OCI-LY7 (cell line): ENCODE measurements at regions of chr11 and their contacts with region 1.

Region 1: GRCh38 chr11:67401495-67402191 is at the start of gene PPP1CA:
- DNase-seq: peak; percentile 92
- H3K4me3 ChIP-seq: peak within 1 kb of the TSS; percentile 97
- H3K27ac ChIP-seq: peak within 1 kb of the TSS; percentile 97
- H3K4me1 ChIP-seq: peaks cover 59% of the 10 kb centered on the region
- CTCF ChIP-seq: no peak; the same call in none of the 2 replicates
- total RNA-seq, gene PPP1CA: 248 and 311 TPM in 2 replicates

Region 2: DNA sequence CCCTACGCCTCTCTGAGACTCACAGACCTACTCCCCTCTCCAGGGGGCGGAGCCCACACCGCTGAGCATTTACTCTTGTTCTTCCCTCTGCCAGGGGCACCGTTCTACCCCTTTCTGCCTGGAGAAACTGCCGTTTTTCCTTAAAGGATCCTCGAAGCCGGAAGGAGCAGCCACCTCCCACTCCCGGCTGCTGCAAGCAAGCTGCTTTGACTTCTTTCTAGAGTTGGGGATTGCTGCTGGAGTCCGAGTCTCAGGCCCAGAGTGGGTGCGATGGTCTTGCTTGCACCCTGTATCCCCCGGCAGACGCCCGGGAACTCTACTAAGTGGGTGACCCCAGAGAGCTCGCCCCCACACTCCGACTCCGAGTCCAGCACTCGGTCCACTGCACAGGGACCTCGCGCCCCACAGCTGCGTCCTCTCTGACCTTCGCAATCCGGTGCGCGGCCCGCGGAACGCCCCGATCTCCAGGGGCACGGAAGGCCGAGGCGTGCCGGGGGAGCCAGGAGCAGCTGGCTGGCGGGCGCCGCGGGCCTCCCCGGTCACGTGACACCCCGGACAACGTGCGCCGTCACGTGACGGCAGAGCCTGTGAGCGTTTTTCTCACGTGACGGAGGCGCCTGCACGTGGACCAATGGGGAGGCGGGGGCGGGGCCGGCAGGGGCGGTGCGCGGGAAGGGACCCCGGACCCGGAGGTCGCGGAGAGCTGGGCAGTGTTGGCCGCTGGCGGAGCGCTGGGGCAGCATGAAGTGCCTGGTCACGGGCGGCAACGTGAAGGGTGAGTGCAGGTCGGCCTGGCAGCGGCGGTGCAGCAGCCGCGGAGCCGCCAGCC is 10.1 kb before region 1 on chr11 and contains the start of gene RAD9A:
- CTCF ChIA-PET with region 1: interaction called, 6 read pairs
- POLR2A ChIA-PET with region 1: interaction called, 16 read pairs
- intact Hi-C with region 1: no loop called
- DNase-seq: peak; percentile 98
- H3K4me3 ChIP-seq: peak within 1 kb of the TSS; percentile 78
- H3K27ac ChIP-seq: peak within 1 kb of the TSS; percentile 54
- H3K4me1 ChIP-seq: peaks cover 36% of the 10 kb centered on the region
- CTCF ChIP-seq: no peak
- total RNA-seq, gene RAD9A: 30.1 and 51.0 TPM in 2 replicates

Region 3: GRCh38 chr11:67420646-67421420 is 19.2 kb after region 1 on chr11:
- CTCF ChIA-PET with region 1: interaction called, 3 read pairs
- POLR2A ChIA-PET with region 1: interaction called, 15 read pairs
- intact Hi-C with region 1: loop called (anchors 1 kb)
- DNase-seq: peak; percentile 95
- H3K4me3 ChIP-seq: peak overlapping the region; percentile 68
- H3K27ac ChIP-seq: peak overlapping the region; percentile 19
- H3K4me1 ChIP-seq: peaks cover 50% of the 10 kb centered on the region
- CTCF ChIP-seq: no peak

Region 4: GRCh38 chr11:67439321-67439883 is 37.8 kb after region 1 on chr11:
- CTCF ChIA-PET with region 1: interaction called, 7 read pairs
- POLR2A ChIA-PET with region 1: interaction called, 38 read pairs
- intact Hi-C with region 1: no loop called
- DNase-seq: no peak
- H3K4me3 ChIP-seq: peak overlapping the region; percentile 81
- H3K27ac ChIP-seq: peak overlapping the region; percentile 94
- H3K4me1 ChIP-seq: peaks cover 80% of the 10 kb centered on the region
- CTCF ChIP-seq: peak; percentile 72

Region 5: GRCh38 chr11:67482825-67483798 is 81.5 kb after region 1 on chr11 and contains the start of gene AIP:
- CTCF ChIA-PET with region 1: no interaction called
- POLR2A ChIA-PET with region 1: interaction called, 7 read pairs
- intact Hi-C with region 1: loop called (anchors 1 kb)
- DNase-seq: peak; percentile 99
- H3K4me3 ChIP-seq: peak within 1 kb of the TSS; percentile 71
- H3K27ac ChIP-seq: peak within 1 kb of the TSS; percentile 87
- H3K4me1 ChIP-seq: peaks cover 44% of the 10 kb centered on the region
- CTCF ChIP-seq: no peak
- total RNA-seq, gene AIP: 123 and 125 TPM in 2 replicates

Region 6: DNA sequence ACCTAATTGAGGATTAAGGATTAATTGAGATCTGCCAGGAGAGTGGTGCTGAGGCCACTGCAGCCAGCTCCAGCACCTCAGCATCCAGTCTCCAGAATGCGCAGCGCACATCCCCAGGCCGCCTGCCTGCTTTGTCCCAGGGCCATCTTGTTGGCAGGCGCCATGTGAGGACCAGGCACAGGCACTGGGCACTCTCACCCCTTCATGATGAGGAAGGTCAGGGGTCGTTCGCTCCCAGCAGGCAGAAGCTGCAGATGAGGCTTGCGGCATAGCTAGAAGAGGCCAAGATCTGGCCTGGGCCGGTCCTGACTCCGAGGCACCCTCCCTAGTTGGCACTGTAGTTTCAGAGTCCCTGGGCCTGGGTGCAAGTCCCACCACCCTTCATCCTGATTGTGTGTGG is 115.2 kb after region 1 on chr11:
- CTCF ChIA-PET with region 1: no interaction called
- POLR2A ChIA-PET with region 1: no interaction called
- intact Hi-C with region 1: no loop called
- DNase-seq: no peak
- H3K4me3 ChIP-seq: no peak overlapping the region
- H3K27ac ChIP-seq: no peak overlapping the region
- H3K4me1 ChIP-seq: no peaks in the 10 kb centered on the region
- CTCF ChIP-seq: no peak

Region 7: DNA sequence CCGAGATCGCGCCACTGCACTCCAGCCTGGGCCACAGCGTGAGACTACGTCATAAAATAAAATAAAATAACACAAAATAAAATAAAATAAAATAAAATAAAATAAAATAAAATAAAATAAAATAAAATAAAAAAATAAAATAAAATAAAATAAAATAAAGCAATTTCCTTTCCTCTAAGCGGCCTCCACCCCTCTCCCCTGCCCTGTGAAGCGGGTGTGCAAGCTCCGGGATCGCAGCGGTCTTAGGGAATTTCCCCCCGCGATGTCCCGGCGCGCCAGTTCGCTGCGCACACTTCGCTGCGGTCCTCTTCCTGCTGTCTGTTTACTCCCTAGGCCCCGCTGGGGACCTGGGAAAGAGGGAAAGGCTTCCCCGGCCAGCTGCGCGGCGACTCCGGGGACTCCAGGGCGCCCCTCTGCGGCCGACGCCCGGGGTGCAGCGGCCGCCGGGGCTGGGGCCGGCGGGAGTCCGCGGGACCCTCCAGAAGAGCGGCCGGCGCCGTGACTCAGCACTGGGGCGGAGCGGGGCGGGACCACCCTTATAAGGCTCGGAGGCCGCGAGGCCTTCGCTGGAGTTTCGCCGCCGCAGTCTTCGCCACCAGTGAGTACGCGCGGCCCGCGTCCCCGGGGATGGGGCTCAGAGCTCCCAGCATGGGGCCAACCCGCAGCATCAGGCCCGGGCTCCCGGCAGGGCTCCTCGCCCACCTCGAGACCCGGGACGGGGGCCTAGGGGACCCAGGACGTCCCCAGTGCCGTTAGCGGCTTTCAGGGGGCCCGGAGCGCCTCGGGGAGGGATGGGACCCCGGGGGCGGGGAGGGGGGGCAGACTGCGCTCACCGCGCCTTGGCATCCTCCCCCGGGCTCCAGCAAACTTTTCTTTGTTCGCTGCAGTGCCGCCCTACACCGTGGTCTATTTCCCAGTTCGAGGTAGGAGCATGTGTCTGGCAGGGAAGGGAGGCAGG is 181.9 kb after region 1 on chr11 and contains the start of gene GSTP1:
- CTCF ChIA-PET with region 1: no interaction called
- POLR2A ChIA-PET with region 1: no interaction called
- intact Hi-C with region 1: loop called (anchors 5 kb)
- DNase-seq: peak; percentile 91
- H3K4me3 ChIP-seq: peak within 1 kb of the TSS; percentile 88
- H3K27ac ChIP-seq: peak within 1 kb of the TSS; percentile 84
- H3K4me1 ChIP-seq: peaks cover 68% of the 10 kb centered on the region
- CTCF ChIP-seq: peak; percentile 79
- total RNA-seq, gene GSTP1: 1,251 and 1,604 TPM in 2 replicates

Region 8: GRCh38 chr11:67640021-67640757 is 238.5 kb after region 1 on chr11:
- CTCF ChIA-PET with region 1: no interaction called
- POLR2A ChIA-PET with region 1: no interaction called
- intact Hi-C with region 1: loop called (anchors 10 kb)
- DNase-seq: peak; percentile 82
- H3K4me3 ChIP-seq: no peak overlapping the region
- H3K27ac ChIP-seq: no peak overlapping the region
- H3K4me1 ChIP-seq: peaks cover 20% of the 10 kb centered on the region
- CTCF ChIP-seq: peak; percentile 86